ENCODE measurements at regions of chr4 and their contacts with region 1.

Region 1: GRCh38 chr4:141133146-141133998 is at the start of gene RNF150:
- DNase-seq: peak; percentile 69
- H3K27ac ChIP-seq: no peak within 1 kb of the TSS
- CTCF ChIP-seq: peak; percentile 72

Region 2: DNA sequence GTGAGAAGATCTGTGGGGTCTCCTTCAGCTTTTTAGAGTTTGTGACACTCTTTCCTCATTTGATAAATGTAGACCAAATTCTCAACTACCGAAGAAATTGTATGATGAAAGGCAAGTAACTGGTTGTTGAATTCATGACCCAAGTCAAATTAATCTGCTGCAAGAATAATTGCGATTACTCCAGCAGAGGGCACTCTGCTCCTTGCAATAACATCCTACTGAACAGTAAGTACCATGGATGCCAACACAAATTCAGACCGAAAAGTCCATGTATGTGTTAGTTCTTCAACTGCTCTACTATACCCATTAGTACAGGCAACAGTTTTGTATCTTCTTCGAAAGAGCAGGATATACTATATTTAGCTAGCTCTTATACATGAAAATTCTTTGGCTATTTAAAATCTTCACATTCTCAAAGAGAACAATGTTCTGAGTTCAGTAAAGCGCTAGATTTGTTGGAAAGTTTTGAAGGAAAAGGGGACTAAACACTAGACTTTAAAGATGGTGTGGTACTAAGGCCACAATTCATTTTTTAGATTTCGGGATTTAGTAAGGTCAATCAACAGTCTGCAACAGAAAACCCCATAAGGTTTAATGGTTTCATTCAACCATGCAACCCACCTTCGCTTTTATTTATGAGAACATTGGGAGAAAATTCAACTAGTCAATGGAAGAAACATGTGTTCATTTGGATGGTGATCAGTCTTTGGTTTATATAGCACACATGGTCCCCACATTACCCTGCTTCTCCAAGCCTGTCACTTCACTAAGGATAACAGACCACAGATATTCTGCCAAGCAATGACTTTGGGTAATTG is 271.8 kb before region 1 on chr4:
- CTCF ChIA-PET with region 1: interaction called, 15 read pairs
- POLR2A ChIA-PET with region 1: no interaction called
- DNase-seq: peak; percentile 36
- H3K27ac ChIP-seq: no peak overlapping the region
- CTCF ChIP-seq: peak; percentile 79

Region 3: GRCh38 chr4:140955641-140956040 is 177.7 kb before region 1 on chr4:
- CTCF ChIA-PET with region 1: no interaction called
- POLR2A ChIA-PET with region 1: no interaction called
- DNase-seq: no peak
- H3K27ac ChIP-seq: no peak overlapping the region
- CTCF ChIP-seq: no peak

Region 4: GRCh38 chr4:141195095-141195707 is 61.8 kb after region 1 on chr4:
- CTCF ChIA-PET with region 1: no interaction called
- POLR2A ChIA-PET with region 1: no interaction called
- DNase-seq: no peak
- H3K27ac ChIP-seq: no peak overlapping the region
- CTCF ChIP-seq: no peak

Region 5: GRCh38 chr4:142265536-142265935 is 1132.2 kb after region 1 on chr4:
- CTCF ChIA-PET with region 1: interaction called, 10 read pairs
- POLR2A ChIA-PET with region 1: no interaction called
- DNase-seq: peak; percentile 34
- H3K27ac ChIP-seq: no peak overlapping the region
- CTCF ChIP-seq: no peak